ENCODE measurements at regions of chr2 and their contacts with region 1.

Region 1: DNA sequence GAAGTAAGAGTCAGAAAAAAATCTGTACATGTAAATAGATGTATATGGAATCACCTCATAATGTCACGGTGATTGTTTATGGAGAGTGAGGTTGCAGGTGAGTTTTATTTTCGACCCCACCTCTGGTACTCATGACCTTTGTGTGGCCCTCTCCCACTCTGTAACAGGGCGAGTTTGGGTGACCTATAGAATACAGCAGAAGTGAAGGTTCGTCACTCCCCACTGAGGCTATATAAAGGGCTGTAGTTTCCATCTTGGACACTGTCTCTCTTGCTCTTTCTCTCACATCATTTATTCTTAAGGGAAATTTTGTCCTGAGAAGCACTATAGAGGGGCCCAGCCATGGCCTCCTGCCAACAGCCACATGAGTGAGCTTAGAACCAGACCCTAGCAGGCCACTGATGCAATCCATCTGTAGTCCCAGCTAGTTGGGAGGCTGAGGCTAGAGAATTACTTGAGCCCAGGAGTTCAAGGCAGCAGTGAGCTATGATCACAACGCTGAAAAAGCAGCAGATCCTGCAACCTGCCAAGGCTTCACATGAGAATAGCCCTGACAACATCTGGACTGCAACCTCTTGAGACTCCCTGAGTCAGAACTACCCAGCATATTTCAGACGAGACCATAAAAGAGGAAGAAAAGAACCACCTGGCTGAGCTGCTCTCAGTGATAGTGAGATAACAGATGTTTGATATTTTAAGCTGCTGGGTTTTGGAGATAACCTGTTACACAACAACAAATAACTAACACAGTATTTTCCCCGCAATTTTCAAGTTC is 74.3 kb upstream of the SLC1A4 start:
- DNase-seq: no peak
- ATAC-seq: no peak
- H3K4me3 Mint-ChIP-seq: no peak overlapping the region
- H3K27ac Mint-ChIP-seq: no peak overlapping the region
- H3K4me1 Mint-ChIP-seq: peaks cover 49% of the 10 kb centered on the region
- H3K27me3 Mint-ChIP-seq: no peaks in the 10 kb centered on the region

Region 2: GRCh38 chr2:64937687-64938491 is 23.0 kb after region 1 on chr2:
- CTCF ChIA-PET with region 1: interaction called, 12 read pairs
- DNase-seq: no peak
- ATAC-seq: no peak
- H3K4me3 Mint-ChIP-seq: no peak overlapping the region
- H3K27ac Mint-ChIP-seq: no peak overlapping the region
- H3K4me1 Mint-ChIP-seq: peaks cover 36% of the 10 kb centered on the region
- H3K27me3 Mint-ChIP-seq: peaks cover 3% of the 10 kb centered on the region

Region 3: GRCh38 chr2:64978514-64979268 is 63.8 kb after region 1 on chr2:
- CTCF ChIA-PET with region 1: interaction called, 24 read pairs
- DNase-seq: no peak
- ATAC-seq: peak; percentile 59
- H3K4me3 Mint-ChIP-seq: no peak overlapping the region
- H3K27ac Mint-ChIP-seq: no peak overlapping the region
- H3K4me1 Mint-ChIP-seq: peaks cover 53% of the 10 kb centered on the region
- H3K27me3 Mint-ChIP-seq: peaks cover 5% of the 10 kb centered on the region

Region 4: DNA sequence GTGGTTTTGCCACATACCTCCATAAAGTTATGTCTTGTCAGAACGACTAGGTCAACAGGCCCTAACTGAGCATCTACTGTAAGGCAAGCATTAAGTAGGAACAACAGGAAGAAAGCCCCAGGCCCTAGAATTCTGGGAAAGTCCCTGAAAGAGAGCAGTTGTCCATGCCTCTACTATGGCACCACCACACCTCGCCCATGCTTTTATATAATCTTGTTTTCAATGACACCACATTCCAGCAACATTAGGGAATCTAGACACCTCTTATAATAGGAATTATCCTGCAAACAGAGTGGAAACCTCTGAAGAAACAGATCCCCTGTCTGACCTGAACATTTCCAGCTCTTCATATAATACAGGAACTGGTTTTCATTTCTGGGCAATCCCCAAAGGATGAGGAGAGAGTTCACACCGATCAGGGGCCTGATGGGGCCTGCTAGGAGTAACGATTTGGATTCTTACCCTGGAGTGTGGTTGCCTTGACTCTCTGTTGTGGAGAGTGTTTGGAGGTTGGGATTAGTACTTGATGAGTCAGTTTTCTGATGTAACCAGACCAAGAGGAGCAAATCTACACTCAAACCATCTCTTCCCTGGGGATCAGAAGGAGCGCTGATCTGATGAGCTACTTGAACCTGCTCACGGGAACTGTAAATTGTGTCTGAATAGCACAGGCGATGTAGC is 109.4 kb after region 1 on chr2:
- CTCF ChIA-PET with region 1: interaction called, 10 read pairs
- DNase-seq: no peak
- ATAC-seq: no peak
- H3K4me3 Mint-ChIP-seq: no peak overlapping the region
- H3K27ac Mint-ChIP-seq: peak overlapping the region; percentile 24
- H3K4me1 Mint-ChIP-seq: peaks cover 6% of the 10 kb centered on the region
- H3K27me3 Mint-ChIP-seq: no peaks in the 10 kb centered on the region

Region 5: DNA sequence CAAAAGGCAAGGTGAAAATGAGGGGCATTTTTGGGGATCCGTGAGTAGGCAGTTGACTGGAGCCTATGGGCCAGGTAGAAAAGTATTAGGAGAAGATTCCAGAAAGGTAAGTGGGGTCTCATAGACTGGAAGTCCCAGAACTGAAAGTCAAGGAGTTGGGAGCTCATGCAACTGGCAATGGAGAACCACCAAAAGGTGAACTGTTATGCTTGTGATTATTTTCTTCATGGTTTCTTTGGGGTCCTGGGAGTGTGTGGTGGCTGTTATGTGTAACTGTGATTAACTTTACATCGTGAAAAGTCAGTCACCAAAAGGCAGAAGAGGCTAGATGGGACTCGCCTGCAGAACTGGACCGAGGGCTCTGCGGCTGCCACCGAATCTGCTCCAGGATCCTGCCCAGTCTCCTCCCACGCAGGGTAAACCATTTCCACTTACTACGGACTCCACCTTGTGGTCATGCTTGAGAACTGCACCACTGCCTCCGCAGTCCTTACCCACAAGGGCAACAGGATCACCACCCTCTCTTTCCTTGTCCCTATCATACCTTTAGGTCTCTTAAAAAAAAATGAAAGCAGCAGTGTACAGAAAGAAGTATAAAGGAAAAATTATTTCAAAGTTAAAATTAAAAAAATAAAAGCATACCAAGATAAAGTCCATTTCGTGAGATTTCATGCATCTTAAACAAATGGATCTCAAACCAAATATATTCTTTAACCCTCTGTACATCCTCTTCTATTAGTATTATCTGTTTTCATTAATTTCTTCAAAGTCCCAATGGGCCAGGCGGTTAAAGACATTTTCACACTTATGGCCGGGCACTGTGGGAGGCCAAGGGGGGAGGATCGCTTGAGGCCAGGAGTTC is 125.7 kb after region 1 on chr2:
- CTCF ChIA-PET with region 1: interaction called, 61 read pairs
- DNase-seq: peak; percentile 87
- ATAC-seq: peak; percentile 99
- H3K4me3 Mint-ChIP-seq: no peak overlapping the region
- H3K27ac Mint-ChIP-seq: no peak overlapping the region
- H3K4me1 Mint-ChIP-seq: peaks cover 16% of the 10 kb centered on the region
- H3K27me3 Mint-ChIP-seq: no peaks in the 10 kb centered on the region

Region 6: DNA sequence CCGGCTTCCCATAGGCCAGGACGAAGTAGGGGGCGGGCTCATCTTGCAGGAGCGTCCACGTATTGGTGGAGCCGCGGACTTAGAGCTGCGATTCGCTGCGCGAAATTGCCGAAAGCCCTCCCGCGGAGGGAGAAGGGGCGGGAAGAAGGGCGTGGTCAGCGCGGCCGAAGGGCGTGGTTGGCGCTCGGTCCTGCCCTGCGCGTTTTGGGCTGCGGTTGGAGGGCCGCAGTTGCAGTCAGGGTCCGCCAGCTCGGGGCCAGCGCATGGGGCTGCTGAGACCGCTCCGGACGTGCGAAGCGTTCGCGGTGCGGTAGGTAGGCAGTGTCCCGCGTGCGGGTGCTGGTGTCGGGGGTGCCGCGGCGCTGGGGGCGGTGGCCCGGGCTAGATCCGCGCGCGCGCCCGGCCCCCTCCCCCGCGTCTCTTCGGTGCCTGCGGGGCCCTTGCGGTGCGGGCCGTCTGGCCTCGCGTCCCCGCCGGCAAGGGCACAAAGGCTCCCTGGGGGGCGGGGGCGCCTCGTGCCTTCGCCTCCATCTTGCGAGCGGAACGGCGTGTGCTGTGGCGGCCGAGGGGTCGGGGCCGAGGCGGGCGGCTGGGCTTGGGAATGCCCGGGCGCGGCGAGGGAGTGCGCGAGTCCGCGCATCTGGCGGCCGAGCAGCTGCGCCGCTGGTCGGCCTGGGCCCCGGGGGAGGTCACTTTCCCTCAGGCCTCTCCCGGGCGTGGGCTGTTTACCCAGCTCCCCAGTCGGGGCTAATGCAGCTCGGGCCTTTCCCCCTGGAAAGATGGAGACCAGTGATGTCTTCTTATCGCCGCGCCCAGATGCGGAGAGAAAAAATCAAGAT is 141.5 kb after region 1 on chr2 and contains the start of gene CEP68:
- CTCF ChIA-PET with region 1: interaction called, 19 read pairs
- DNase-seq: peak; percentile 99
- ATAC-seq: peak; percentile 95
- H3K4me3 Mint-ChIP-seq: peak within 1 kb of the TSS; percentile 86
- H3K27ac Mint-ChIP-seq: peak within 1 kb of the TSS; percentile 84
- H3K4me1 Mint-ChIP-seq: peaks cover 57% of the 10 kb centered on the region
- H3K27me3 Mint-ChIP-seq: no peaks in the 10 kb centered on the region
- total RNA-seq, gene CEP68: 5.9 to 9.2 TPM